ENCODE measurements at regions of chr1 and their contacts with region 1.

Region 1: GRCh38 chr1:93629099-93630059 is 52.3 kb downstream of the BCAR3 start:
- DNase-seq: peak in 28 of 35 experiments; percentile 9 to 79 (median 32)
- ATAC-seq: peak; percentile 68 to 79 (median 72)
- H3K4me3 ChIP-seq: no peak overlapping the region
- H3K4me3 Mint-ChIP-seq: no peak overlapping the region
- H3K27ac ChIP-seq: no peak overlapping the region
- H3K27ac Mint-ChIP-seq: no peak overlapping the region
- H3K4me1 ChIP-seq: no peaks in the 10 kb centered on the region
- H3K4me1 Mint-ChIP-seq: no peaks in the 10 kb centered on the region
- H3K27me3 ChIP-seq: no peaks in the 10 kb centered on the region
- H3K27me3 Mint-ChIP-seq: no peaks in the 10 kb centered on the region

Region 2: GRCh38 chr1:93552741-93553455 is 76.5 kb before region 1 on chr1:
- CTCF ChIA-PET with region 1: no interaction called
- POLR2A ChIA-PET with region 1: no interaction called
- DNase-seq: no peak
- ATAC-seq: no peak
- H3K4me3 ChIP-seq: no peak overlapping the region
- H3K4me3 Mint-ChIP-seq: no peak overlapping the region
- H3K27ac ChIP-seq: no peak overlapping the region
- H3K27ac Mint-ChIP-seq: no peak overlapping the region
- H3K4me1 ChIP-seq: peaks cover 0 to 10% of the 10 kb centered on the region in 2 experiments
- H3K4me1 Mint-ChIP-seq: peaks cover 10 to 28% (median 19%) of the 10 kb centered on the region in 3 donors
- H3K27me3 ChIP-seq: no peaks in the 10 kb centered on the region
- H3K27me3 Mint-ChIP-seq: peaks cover 0 to 3% of the 10 kb centered on the region in 2 donors

Region 3: GRCh38 chr1:93814059-93814794 is 184.8 kb after region 1 on chr1:
- CTCF ChIA-PET with region 1: interaction called, 20 to 35 read pairs
- POLR2A ChIA-PET with region 1: no interaction called
- DNase-seq: peak in 25 of 35 experiments; percentile 4 to 64 (median 19)
- ATAC-seq: peak; percentile 39 to 61 (median 56)
- H3K4me3 ChIP-seq: no peak overlapping the region
- H3K4me3 Mint-ChIP-seq: no peak overlapping the region
- H3K27ac ChIP-seq: no peak overlapping the region
- H3K27ac Mint-ChIP-seq: no peak overlapping the region
- H3K4me1 ChIP-seq: peaks cover 2 to 16% of the 10 kb centered on the region in 2 experiments
- H3K4me1 Mint-ChIP-seq: peaks cover 14 to 22% (median 19%) of the 10 kb centered on the region in 3 donors
- H3K27me3 ChIP-seq: no peaks in the 10 kb centered on the region
- H3K27me3 Mint-ChIP-seq: no peaks in the 10 kb centered on the region

Region 4: DNA sequence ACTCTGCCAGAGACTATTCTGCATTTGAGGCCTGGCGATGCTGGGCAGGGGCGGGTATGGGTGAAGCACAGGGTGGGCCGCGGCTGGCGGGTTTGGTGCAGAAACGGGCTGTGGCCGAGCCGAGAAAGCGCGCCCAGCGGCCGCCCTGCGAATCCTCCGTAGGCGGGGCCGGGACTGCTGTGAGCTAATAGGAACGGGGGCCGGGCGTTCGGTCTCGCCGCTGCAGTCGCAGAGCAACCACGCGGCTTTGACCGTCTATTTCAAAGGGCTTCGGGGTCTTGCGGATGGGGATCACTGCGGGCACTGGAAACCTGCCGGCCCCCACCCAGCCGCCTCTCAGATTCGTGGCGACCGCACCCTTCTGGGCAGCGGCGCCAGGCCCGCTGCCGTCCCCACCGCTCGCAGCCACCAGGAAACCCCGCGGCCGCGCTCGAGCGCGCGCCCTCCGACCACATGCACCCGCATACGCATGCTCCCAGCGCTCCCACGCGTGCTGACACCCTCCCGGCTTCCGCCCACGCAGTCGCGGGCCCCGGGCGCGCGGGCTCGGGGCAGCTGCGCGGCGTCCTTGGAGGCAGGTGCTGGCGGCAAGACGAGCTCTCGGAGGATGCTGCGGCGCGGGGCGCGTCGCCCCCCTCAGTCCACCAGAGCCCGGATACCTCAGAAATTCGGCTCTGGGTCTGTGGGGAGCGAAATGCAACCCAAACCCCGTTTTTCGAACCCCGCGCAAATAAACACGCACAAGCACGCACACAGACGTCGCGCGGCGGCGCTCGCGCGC is 217.0 kb after region 1 on chr1:
- CTCF ChIA-PET with region 1: interaction called, 33 to 87 read pairs
- POLR2A ChIA-PET with region 1: no interaction called
- DNase-seq: peak; percentile 73 to 92 (median 82)
- ATAC-seq: peak; percentile 54 to 62 (median 60)
- H3K4me3 ChIP-seq: peak overlapping the region; percentile 82 to 86
- H3K4me3 Mint-ChIP-seq: peak overlapping the region; percentile 85 to 98 (median 88)
- H3K27ac ChIP-seq: peak overlapping the region; percentile 92
- H3K27ac Mint-ChIP-seq: peak overlapping the region; percentile 93 to 95
- H3K4me1 ChIP-seq: peaks cover 6 to 36% of the 10 kb centered on the region in 2 experiments
- H3K4me1 Mint-ChIP-seq: peaks cover 31 to 39% (median 36%) of the 10 kb centered on the region in 3 donors
- H3K27me3 ChIP-seq: no peaks in the 10 kb centered on the region
- H3K27me3 Mint-ChIP-seq: peaks cover 0 to 5% of the 10 kb centered on the region in 2 donors

Region 5: DNA sequence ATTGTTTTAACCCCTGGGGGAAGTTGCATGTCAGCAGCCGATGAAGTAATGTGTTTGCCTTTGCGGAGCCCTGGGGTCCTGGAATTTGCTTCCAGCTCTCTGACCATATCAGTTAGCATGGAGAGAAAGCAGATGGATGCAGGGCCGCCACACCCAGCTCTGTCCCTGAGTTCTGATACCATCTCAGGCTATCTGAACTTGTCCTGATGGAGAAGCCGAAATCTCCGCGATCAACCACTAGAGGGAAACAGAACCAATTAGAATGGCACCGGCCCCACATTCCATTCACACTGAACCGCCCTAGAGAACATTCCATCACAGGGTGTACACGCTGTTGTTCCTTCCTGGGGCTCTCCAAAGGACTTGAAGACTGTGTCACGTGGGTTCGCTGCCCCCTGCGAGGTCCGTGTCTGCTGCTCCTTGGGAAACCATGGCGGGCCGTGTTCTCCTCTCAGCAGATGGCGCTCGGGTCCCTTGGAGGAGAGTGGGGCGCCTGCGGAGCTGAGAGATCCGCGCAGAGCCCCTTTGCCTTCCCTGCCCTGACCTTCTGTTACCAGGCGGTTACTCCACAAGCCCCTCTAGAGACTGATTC is 416.2 kb after region 1 on chr1:
- CTCF ChIA-PET with region 1: interaction called, 3 to 12 read pairs
- POLR2A ChIA-PET with region 1: no interaction called
- DNase-seq: peak in 19 of 35 experiments; percentile 1 to 40 (median 11)
- ATAC-seq: peak in 2 of 4 experiments; percentile 19 to 45
- H3K4me3 ChIP-seq: peak overlapping the region; percentile 17 to 36
- H3K4me3 Mint-ChIP-seq: peak overlapping the region; percentile 2 to 57 (median 39)
- H3K27ac ChIP-seq: no peak overlapping the region
- H3K27ac Mint-ChIP-seq: no peak overlapping the region
- H3K4me1 ChIP-seq: peaks cover 0 to 6% of the 10 kb centered on the region in 2 experiments
- H3K4me1 Mint-ChIP-seq: peaks cover 4 to 7% (median 6%) of the 10 kb centered on the region in 3 donors
- H3K27me3 ChIP-seq: peaks cover 0 to 36% of the 10 kb centered on the region in 2 experiments
- H3K27me3 Mint-ChIP-seq: peaks cover 9 to 27% of the 10 kb centered on the region in 2 donors